Spleen (tissue), 13 donors: ENCODE measurements at regions of chr15 and their contacts with region 1.

Region 1: DNA sequence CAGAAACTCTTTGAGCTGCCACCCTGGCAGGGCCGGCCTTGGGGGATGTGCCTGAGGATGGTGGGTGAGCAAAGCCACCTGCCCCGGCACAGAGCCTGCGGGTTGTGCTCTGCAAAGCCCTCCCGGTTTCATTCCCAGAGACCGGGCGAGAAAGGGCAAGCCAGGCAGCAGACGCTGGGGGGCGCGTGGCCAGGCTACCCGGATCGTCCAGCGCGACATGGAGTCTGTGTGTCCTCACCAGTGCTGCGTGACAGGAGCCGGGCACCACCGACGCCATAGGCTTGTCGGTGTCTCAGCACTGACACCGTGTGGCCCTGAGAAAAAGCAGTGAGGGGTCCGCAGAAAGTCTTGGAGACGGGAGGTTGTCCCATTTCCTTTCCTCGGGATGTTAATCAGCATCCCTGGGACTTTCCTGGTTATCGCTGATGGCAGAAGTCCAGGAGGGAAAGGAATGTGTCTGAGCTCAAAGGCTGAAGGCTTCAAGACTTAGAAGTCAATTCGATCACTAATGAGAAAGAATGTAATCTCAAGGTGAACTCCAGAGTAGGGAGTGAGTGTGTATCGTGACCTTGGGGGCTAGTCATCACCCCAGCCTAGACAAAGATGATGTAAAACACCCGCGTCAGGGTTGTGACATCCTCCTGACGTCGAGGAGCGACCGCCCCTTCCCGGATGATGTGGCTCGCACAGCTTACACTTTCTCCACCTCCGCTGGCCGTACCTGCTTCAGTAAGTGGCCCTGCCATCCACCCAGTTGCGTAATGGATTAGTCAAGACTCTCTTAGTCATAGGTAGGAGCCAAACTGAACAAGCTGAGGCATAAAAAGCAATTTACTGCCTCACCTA is 36.3 kb upstream of the PLA2G4E start:
- DNase-seq: peak; percentile 84
- H3K4me3 ChIP-seq: peak overlapping the region in 7 of 8 donors; percentile 0 to 56 (median 12)
- H3K27ac ChIP-seq: peak overlapping the region in 3 of 8 donors; percentile 2 to 51 (median 19)
- H3K4me1 ChIP-seq: peaks cover 0 to 28% (median 15%) of the 10 kb centered on the region in 6 donors
- H3K27me3 ChIP-seq: peaks cover 0 to 40% (median 0%) of the 10 kb centered on the region in 7 donors
- CTCF ChIP-seq: peak in 8 of 11 experiments; percentile 11 to 61 (median 49)
- POLR2A ChIP-seq: no peak

Region 2: DNA sequence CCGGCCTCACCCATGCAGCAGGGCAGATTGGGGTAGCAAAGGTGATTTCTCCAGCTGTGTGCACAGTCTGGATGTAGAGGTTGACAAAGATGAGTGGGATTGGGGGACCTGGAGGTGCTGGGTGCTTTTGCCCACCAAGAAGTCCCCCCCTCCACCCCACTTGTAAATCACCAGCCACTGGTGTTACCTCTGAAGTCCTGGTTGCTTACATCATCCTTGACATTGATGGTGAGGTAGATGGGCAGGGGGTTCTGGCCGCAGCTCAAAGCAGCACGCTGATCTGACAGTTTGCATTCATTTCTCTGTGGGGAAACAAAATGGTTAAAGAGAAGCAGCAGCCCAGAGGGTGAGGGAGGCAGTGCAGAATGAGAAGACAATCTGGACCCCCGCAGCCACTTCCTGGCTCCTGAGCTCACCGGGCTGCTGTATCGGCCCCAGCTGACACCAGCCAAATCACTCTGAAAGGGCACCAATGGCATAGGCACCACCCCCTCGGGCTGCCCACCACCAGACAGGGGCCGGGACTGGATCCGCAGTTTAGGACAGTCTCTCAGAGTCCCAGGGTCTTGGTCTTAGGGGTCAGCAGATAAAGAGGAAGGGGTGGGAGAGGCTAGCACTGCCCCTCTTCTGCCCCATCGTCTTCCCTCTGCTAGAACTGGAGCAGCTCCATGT is 67.1 kb before region 1 on chr15:
- intact Hi-C with region 1: loop called (anchors 5 kb)
- DNase-seq: peak; percentile 61
- H3K4me3 ChIP-seq: no peak overlapping the region
- H3K27ac ChIP-seq: no peak overlapping the region
- H3K4me1 ChIP-seq: peaks cover 0 to 3% (median 0%) of the 10 kb centered on the region in 6 donors
- H3K27me3 ChIP-seq: peaks cover 0 to 20% (median 5%) of the 10 kb centered on the region in 7 donors
- CTCF ChIP-seq: no peak
- POLR2A ChIP-seq: no peak

Region 3: DNA sequence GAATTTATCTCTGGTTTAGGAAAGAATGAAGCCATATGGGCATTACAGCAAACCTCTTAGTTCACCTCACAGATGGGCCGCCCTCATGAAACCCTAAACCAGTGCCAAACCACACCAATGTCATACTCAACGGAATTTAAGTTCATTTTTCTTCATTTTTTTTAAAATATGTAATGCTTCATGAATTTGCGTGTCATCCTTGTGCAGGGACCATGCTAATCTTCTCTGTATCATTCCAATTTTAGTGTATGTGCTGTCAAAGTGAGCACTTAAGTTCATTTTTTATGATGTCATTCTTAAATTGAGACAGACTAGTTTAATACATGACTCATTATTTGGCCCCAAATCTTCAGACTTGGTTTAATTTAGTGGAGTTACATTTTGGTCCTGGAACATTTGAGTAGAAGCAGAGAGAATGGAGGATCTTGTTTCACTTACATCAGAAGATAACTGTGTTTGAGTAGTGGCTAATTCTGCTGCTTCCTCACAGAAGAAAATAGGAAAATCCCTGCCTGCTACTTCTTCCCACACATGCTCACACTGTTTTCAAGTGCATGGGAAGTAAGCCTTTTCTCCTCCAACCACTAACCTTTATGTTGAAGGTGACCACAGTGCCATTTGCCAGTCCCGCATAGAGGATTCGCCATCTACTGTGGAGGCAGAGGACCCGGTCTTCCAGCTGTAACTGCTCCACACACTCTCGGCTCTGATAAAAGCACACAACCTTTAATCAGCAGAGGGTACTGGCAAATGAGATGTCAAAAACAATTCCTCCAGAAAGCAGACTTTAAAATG is 370.5 kb after region 1 on chr15:
- intact Hi-C with region 1: no loop called
- DNase-seq: no peak
- H3K4me3 ChIP-seq: no peak overlapping the region
- H3K27ac ChIP-seq: no peak overlapping the region
- H3K4me1 ChIP-seq: no peaks in the 10 kb centered on the region
- H3K27me3 ChIP-seq: no peaks in the 10 kb centered on the region
- CTCF ChIP-seq: no peak
- POLR2A ChIP-seq: no peak